Spleen (tissue), 13 donors: ENCODE measurements at regions of chr21 and their contacts with region 1.

Region 1: GRCh38 chr21:44601596-44602462 is 1.4 kb downstream of the KRTAP10-7 start:
- DNase-seq: no peak
- H3K4me3 ChIP-seq: no peak overlapping the region
- H3K27ac ChIP-seq: no peak overlapping the region
- H3K4me1 ChIP-seq: no peaks in the 10 kb centered on the region
- H3K27me3 ChIP-seq: peaks cover 0 to 46% (median 21%) of the 10 kb centered on the region in 7 donors
- CTCF ChIP-seq: no peak
- POLR2A ChIP-seq: no peak

Region 2: GRCh38 chr21:44730951-44731579 is 129.2 kb after region 1 on chr21:
- intact Hi-C with region 1: loop called (anchors 5 kb)
- DNase-seq: no peak
- H3K4me3 ChIP-seq: no peak overlapping the region
- H3K27ac ChIP-seq: no peak overlapping the region
- H3K4me1 ChIP-seq: no peaks in the 10 kb centered on the region
- H3K27me3 ChIP-seq: peaks cover 0 to 60% (median 19%) of the 10 kb centered on the region in 7 donors
- CTCF ChIP-seq: no peak
- POLR2A ChIP-seq: no peak